ENCODE measurements at regions of chr2 and their contacts with region 1.

Region 1: GRCh38 chr2:202870431-202871299 is 901 bp downstream of the ICA1L start:
- DNase-seq: peak; percentile 84
- H3K4me3 ChIP-seq: peak overlapping the region; percentile 84 to 99 (median 95)
- H3K27ac ChIP-seq: peak overlapping the region; percentile 11 to 75 (median 56)
- H3K4me1 ChIP-seq: peaks cover 0 to 22% (median 8%) of the 10 kb centered on the region in 6 donors
- H3K27me3 ChIP-seq: peaks cover 0 to 6% (median 0%) of the 10 kb centered on the region in 7 donors
- CTCF ChIP-seq: peak; percentile 35 to 71 (median 57)
- POLR2A ChIP-seq: no peak

Region 2: GRCh38 chr2:202588647-202589581 is 281.8 kb before region 1 on chr2:
- intact Hi-C with region 1: loop called (anchors 5 kb)
- DNase-seq: peak; percentile 84
- H3K4me3 ChIP-seq: peak overlapping the region in 1 of 8 donors; percentile 49
- H3K27ac ChIP-seq: no peak overlapping the region
- H3K4me1 ChIP-seq: peaks cover 6 to 11% (median 9%) of the 10 kb centered on the region in 6 donors
- H3K27me3 ChIP-seq: no peaks in the 10 kb centered on the region
- CTCF ChIP-seq: peak; percentile 71 to 96 (median 91)
- POLR2A ChIP-seq: no peak

Region 3: GRCh38 chr2:202653890-202654289 is 216.8 kb before region 1 on chr2:
- intact Hi-C with region 1: no loop called
- DNase-seq: no peak
- H3K4me3 ChIP-seq: no peak overlapping the region
- H3K27ac ChIP-seq: no peak overlapping the region
- H3K4me1 ChIP-seq: peaks cover 0 to 86% (median 38%) of the 10 kb centered on the region in 6 donors
- H3K27me3 ChIP-seq: no peaks in the 10 kb centered on the region
- CTCF ChIP-seq: no peak
- POLR2A ChIP-seq: no peak

Region 4: GRCh38 chr2:202989749-202990148 is 119.1 kb after region 1 on chr2:
- intact Hi-C with region 1: no loop called
- DNase-seq: no peak
- H3K4me3 ChIP-seq: no peak overlapping the region
- H3K27ac ChIP-seq: no peak overlapping the region
- H3K4me1 ChIP-seq: no peaks in the 10 kb centered on the region
- H3K27me3 ChIP-seq: no peaks in the 10 kb centered on the region
- CTCF ChIP-seq: no peak
- POLR2A ChIP-seq: no peak